Body of pancreas (tissue), 4 donors: ENCODE measurements at regions of chr18 and their contacts with region 1.

Region 1: GRCh38 chr18:63518178-63519012 is 23.8 kb upstream of the SERPINB12 start:
- DNase-seq: peak; percentile 68 to 80 (median 72)
- ATAC-seq: peak; percentile 82
- H3K4me3 ChIP-seq: no peak overlapping the region
- H3K27ac ChIP-seq: no peak overlapping the region
- H3K4me1 ChIP-seq: peaks cover 6% of the 10 kb centered on the region
- H3K27me3 ChIP-seq: no peaks in the 10 kb centered on the region
- CTCF ChIP-seq: peak; percentile 49 to 84 (median 78)
- POLR2A ChIP-seq: no peak

Region 2: DNA sequence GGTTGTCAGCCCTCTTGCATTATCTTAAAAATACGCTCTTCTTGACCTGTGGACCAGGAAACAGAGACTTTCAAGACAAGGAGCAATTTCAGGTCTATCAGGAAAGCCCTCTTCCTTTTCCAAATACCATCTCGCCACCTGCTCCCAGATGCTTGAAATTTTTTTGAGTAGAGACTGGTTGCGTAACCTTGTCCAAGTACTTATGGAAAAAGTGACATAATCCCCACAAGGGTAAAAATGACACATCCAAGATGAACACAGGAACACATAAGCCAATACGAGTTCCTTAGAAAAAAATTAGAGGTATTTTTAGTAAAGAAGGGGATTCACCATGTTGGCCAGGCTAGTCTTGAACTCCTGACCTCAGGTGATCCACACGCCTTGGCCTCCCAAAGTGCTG is 70.5 kb after region 1 on chr18:
- intact Hi-C with region 1: loop called (anchors 10 kb)
- DNase-seq: no peak
- ATAC-seq: no peak
- H3K4me3 ChIP-seq: no peak overlapping the region
- H3K27ac ChIP-seq: no peak overlapping the region
- H3K4me1 ChIP-seq: no peaks in the 10 kb centered on the region
- H3K27me3 ChIP-seq: peaks cover 0 to 4% of the 10 kb centered on the region in 2 donors
- CTCF ChIP-seq: no peak
- POLR2A ChIP-seq: no peak

Region 3: GRCh38 chr18:63850000-63850399 is 331.6 kb after region 1 on chr18:
- intact Hi-C with region 1: loop called (anchors 10 kb)
- DNase-seq: no peak
- ATAC-seq: no peak
- H3K4me3 ChIP-seq: no peak overlapping the region
- H3K27ac ChIP-seq: no peak overlapping the region
- H3K4me1 ChIP-seq: no peaks in the 10 kb centered on the region
- H3K27me3 ChIP-seq: no peaks in the 10 kb centered on the region
- CTCF ChIP-seq: peak in 1 of 7 experiments; percentile 7
- POLR2A ChIP-seq: no peak